Activated CD8-positive, alpha-beta memory T cell treated with anti-CD3 and anti-CD28 coated beads, Interleukin-2, amount 10 ng/mL, durations not matched to agents 7 days and 5 days (primary cell): ENCODE measurements at regions of chr3 and their contacts with region 1.

Region 1: DNA sequence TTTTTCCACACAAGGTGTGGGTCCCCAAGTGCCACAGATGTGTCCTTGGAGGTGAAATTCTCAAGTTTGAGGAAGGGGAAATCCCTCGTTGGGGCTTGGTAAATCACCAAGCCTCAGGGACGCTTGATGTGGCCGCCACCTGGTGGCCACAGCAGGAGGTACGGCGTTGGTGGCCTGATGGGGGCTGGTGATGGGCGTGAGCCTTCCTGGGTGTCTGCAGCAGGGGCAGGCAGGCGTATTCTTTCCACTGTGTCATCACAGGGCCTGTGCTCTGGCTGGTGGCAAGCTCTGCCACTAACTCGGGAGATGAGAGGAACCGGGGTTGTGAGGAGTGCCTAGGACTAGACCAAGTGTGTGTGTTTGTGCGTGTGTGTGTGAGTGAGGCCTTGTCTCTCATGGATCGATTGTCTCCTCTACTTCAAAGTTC is 4.2 kb downstream of the ACOX2 start:
- DNase-seq: peak; percentile 85
- ATAC-seq: peak; percentile 93
- H3K4me3 Mint-ChIP-seq: no peak overlapping the region
- H3K27ac Mint-ChIP-seq: no peak overlapping the region
- H3K4me1 Mint-ChIP-seq: peaks cover 15% of the 10 kb centered on the region
- H3K27me3 Mint-ChIP-seq: peaks cover 2% of the 10 kb centered on the region

Region 2: GRCh38 chr3:58324391-58325390 is 208.1 kb before region 1 on chr3:
- CTCF ChIA-PET with region 1: interaction called, 14 read pairs
- DNase-seq: no peak
- ATAC-seq: peak; percentile 52
- H3K4me3 Mint-ChIP-seq: no peak overlapping the region
- H3K27ac Mint-ChIP-seq: peak overlapping the region; percentile 66
- H3K4me1 Mint-ChIP-seq: peaks cover 29% of the 10 kb centered on the region
- H3K27me3 Mint-ChIP-seq: no peaks in the 10 kb centered on the region